ENCODE measurements at regions of chr10 and their contacts with region 1.

Region 1: GRCh38 chr10:53209944-53210611 is 437.5 kb upstream of the MBL2 start:
- DNase-seq: peak; percentile 39
- H3K4me3 ChIP-seq: no peak overlapping the region
- H3K27ac ChIP-seq: no peak overlapping the region
- H3K4me1 ChIP-seq: no peaks in the 10 kb centered on the region
- H3K27me3 ChIP-seq: no peaks in the 10 kb centered on the region
- CTCF ChIP-seq: peak; percentile 64 to 66

Region 2: GRCh38 chr10:52951824-52952223 is 258.3 kb before region 1 on chr10:
- CTCF ChIA-PET with region 1: no interaction called
- dilution Hi-C with region 1: no loop called
- in situ Hi-C with region 1: no loop called
- intact Hi-C with region 1: loop called (anchors 10 kb)
- DNase-seq: peak; percentile 8
- H3K4me3 ChIP-seq: no peak overlapping the region
- H3K27ac ChIP-seq: no peak overlapping the region
- H3K4me1 ChIP-seq: peaks cover 5% of the 10 kb centered on the region
- H3K27me3 ChIP-seq: no peaks in the 10 kb centered on the region
- CTCF ChIP-seq: peak; percentile 2 to 40

Region 3: DNA sequence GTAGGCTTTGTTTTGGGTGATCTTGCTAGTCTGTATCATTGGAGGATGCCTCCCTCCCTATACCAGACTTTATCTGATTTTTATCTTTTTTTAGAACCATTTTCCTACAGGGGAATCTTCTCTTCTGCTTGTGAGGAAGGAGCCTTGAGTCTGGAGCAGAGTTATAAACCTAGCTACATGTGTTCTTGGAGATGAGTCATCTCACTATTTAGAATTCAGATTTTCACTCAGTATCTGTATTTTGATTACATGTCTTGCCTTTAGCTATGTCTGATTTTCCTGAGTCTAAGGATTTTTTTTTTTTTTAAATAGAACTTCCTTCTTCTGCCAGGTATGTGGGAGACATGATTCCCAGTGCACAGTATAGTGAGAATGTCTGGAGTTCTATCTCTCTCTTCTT is 225.9 kb before region 1 on chr10:
- CTCF ChIA-PET with region 1: no interaction called
- dilution Hi-C with region 1: no loop called
- in situ Hi-C with region 1: no loop called
- intact Hi-C with region 1: no loop called
- DNase-seq: no peak
- H3K4me3 ChIP-seq: no peak overlapping the region
- H3K27ac ChIP-seq: no peak overlapping the region
- H3K4me1 ChIP-seq: no peaks in the 10 kb centered on the region
- H3K27me3 ChIP-seq: no peaks in the 10 kb centered on the region
- CTCF ChIP-seq: no peak

Region 4: DNA sequence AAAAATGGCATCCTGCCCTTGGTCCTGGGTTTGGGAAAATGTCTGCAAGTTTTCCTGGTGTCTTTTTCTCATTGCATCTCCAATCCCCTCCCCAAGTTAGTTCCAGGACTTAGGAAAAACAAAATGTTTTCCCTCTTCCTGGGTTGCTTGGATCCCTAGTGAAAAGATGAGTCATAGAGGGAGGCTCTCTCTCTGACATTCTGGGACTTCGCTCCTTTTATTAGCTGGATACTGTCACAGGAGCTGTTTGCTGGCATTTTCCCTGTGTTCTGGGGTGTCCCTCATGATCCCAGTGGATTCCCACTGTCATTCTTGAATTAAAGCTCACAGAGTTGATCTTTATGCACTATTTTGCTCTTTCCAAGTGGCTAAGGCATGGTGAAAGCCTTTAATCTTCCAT is 121.1 kb before region 1 on chr10:
- CTCF ChIA-PET with region 1: no interaction called
- dilution Hi-C with region 1: no loop called
- in situ Hi-C with region 1: no loop called
- intact Hi-C with region 1: no loop called
- DNase-seq: no peak
- H3K4me3 ChIP-seq: no peak overlapping the region
- H3K27ac ChIP-seq: no peak overlapping the region
- H3K4me1 ChIP-seq: no peaks in the 10 kb centered on the region
- H3K27me3 ChIP-seq: no peaks in the 10 kb centered on the region
- CTCF ChIP-seq: no peak

Region 5: GRCh38 chr10:53135213-53135896 is 74.7 kb before region 1 on chr10:
- CTCF ChIA-PET with region 1: no interaction called
- dilution Hi-C with region 1: no loop called
- in situ Hi-C with region 1: no loop called
- intact Hi-C with region 1: no loop called
- DNase-seq: no peak
- H3K4me3 ChIP-seq: no peak overlapping the region
- H3K27ac ChIP-seq: no peak overlapping the region
- H3K4me1 ChIP-seq: no peaks in the 10 kb centered on the region
- H3K27me3 ChIP-seq: peaks cover 8% of the 10 kb centered on the region
- CTCF ChIP-seq: no peak

Region 6: GRCh38 chr10:53356616-53357349 is 146.7 kb after region 1 on chr10:
- CTCF ChIA-PET with region 1: no interaction called
- dilution Hi-C with region 1: no loop called
- in situ Hi-C with region 1: no loop called
- intact Hi-C with region 1: no loop called
- DNase-seq: peak; percentile 73
- H3K4me3 ChIP-seq: no peak overlapping the region
- H3K27ac ChIP-seq: no peak overlapping the region
- H3K4me1 ChIP-seq: peaks cover 23% of the 10 kb centered on the region
- H3K27me3 ChIP-seq: no peaks in the 10 kb centered on the region
- CTCF ChIP-seq: no peak

Measured in mammary epithelial cell (primary cell).